ENCODE measurements at regions of chr5 and their contacts with region 1.

Region 1: DNA sequence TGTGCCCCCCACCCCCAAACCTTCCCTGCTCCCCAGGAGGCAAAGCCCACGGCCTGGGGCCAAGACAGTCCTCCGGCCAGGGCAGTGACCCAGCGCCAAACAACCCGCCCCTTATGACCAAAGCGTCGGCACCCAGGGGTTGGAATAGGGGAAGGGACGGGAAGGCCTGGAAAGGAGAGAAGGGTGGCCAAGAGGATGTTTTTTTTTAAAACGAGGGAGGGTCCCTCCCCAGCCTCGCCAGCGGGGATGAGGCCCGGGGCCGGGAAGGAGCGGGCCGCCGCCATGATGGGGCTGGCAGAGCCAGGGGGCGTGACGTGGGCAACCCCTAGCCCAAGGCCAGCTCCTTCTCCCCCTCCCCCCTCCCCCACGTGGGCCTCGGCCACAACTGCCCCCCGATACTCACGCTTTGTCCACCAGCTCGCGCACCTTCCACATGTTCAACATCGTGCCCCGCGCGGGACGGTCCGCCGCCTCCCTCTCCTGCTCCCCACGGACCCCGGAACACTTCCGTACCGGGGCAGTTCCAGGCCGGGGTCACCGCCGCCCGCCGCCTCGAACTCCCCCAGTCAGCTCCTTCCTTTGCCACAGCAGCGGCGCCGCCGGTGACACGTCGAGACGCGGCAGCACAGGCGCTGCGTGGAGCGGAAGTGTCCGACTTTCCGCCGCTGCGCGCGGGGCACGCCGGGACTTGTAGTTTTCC is at the start of gene CLINT1:
- DNase-seq: peak; percentile 94
- ATAC-seq: peak; percentile 81
- H3K4me3 Mint-ChIP-seq: peak within 1 kb of the TSS; percentile 91
- H3K27ac Mint-ChIP-seq: peak within 1 kb of the TSS; percentile 96
- H3K4me1 Mint-ChIP-seq: peaks cover 76% of the 10 kb centered on the region
- H3K27me3 Mint-ChIP-seq: no peaks in the 10 kb centered on the region
- total RNA-seq, gene CLINT1: 59.0 to 69.0 TPM

Region 2: DNA sequence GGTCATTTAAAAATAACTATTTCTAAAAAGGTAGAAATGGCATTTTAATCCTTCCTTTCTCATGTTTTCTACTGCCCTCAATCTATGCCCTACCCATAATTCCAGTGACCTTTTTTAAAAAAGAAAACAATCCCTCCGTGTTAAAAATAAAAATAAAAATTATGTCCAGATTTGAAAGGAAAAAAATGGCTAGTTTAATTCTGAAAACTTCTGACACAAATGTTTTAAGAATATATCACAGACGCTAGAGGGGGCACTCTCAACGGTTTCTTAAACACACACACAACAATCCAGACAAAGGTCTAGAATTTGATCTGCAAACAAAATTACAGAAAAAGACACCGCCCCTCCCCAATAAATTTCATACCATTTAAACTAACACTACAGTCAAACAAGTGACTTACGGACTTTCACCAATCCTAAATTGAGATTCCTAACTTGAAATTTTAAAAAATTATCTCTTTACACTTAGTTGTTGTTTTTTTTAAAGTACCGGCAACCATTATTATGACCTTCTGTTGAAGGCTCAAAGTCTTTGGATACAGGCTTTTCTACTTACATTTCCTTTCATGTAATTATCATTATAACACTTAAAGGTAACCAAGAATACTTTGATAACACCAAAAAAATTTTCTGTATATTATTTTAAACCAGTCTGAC is 38.0 kb before region 1 on chr5:
- CTCF ChIA-PET with region 1: interaction called, 20 read pairs
- POLR2A ChIA-PET with region 1: no interaction called
- intact Hi-C with region 1: loop called (anchors 2 to 5 kb)
- DNase-seq: peak; percentile 42
- ATAC-seq: no peak
- H3K4me3 Mint-ChIP-seq: no peak overlapping the region
- H3K27ac Mint-ChIP-seq: no peak overlapping the region
- H3K4me1 Mint-ChIP-seq: peaks cover 38% of the 10 kb centered on the region
- H3K27me3 Mint-ChIP-seq: no peaks in the 10 kb centered on the region

Region 3: GRCh38 chr5:157870837-157871834 is 12.5 kb after region 1 on chr5:
- CTCF ChIA-PET with region 1: interaction called, 5 read pairs
- POLR2A ChIA-PET with region 1: no interaction called
- intact Hi-C with region 1: loop called (anchors 1 kb)
- DNase-seq: no peak
- ATAC-seq: peak; percentile 60
- H3K4me3 Mint-ChIP-seq: no peak overlapping the region
- H3K27ac Mint-ChIP-seq: peak overlapping the region; percentile 26
- H3K4me1 Mint-ChIP-seq: peaks cover 16% of the 10 kb centered on the region
- H3K27me3 Mint-ChIP-seq: no peaks in the 10 kb centered on the region

Region 4: GRCh38 chr5:157892974-157893373 is 34.3 kb after region 1 on chr5:
- CTCF ChIA-PET with region 1: interaction called, 3 read pairs
- POLR2A ChIA-PET with region 1: interaction called, 4 read pairs
- intact Hi-C with region 1: loop called (anchors 1 to 2 kb)
- DNase-seq: no peak
- ATAC-seq: peak; percentile 84
- H3K4me3 Mint-ChIP-seq: no peak overlapping the region
- H3K27ac Mint-ChIP-seq: no peak overlapping the region
- H3K4me1 Mint-ChIP-seq: peaks cover 19% of the 10 kb centered on the region
- H3K27me3 Mint-ChIP-seq: no peaks in the 10 kb centered on the region

Region 5: DNA sequence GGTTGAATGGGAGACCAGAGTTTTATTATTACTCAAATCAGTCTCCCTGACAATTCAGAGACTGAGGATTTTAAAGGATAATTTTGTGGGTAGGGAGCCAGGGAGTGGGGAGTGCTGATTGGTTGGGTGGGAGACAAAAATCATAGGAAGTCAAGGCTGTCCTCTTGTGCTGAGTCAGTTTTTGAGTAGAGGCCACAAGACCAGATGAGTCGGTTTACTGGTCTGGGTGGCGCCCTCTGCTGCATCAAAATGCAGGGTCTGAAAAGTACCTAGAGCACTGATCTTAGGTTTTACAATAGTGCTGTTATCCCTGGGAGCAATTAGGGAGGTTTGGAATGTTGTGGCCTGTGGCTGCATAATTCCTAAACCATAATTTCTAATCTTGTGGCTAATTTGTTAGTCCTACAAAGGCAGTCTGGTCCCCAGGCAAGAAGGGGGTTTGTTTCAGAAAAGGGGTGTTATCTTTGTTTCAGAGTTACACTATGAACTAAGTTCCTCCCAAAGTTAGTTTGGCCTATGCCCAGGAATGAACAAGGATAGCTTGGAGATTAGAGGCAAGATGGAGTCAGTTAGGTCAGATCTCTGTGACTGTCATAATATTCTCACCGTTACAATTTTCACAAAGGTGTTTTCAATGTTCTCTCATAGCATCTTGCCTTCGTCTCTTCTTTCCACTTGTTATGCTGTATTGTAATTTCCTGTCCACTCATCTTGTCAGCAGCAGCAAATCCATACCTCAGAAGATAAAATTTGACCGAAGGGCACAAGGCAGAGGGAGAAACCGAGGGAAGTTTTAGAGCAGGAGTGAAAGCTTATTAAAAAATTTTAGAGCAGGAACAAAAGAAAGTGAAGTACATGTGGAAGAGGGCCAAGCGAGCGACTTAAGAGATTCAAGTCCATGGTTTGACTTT is 59.5 kb after region 1 on chr5:
- CTCF ChIA-PET with region 1: interaction called, 11 read pairs
- POLR2A ChIA-PET with region 1: no interaction called
- intact Hi-C with region 1: loop called (anchors 1 to 2 kb)
- DNase-seq: peak; percentile 86
- ATAC-seq: peak; percentile 87
- H3K4me3 Mint-ChIP-seq: no peak overlapping the region
- H3K27ac Mint-ChIP-seq: peak overlapping the region; percentile 51
- H3K4me1 Mint-ChIP-seq: peaks cover 26% of the 10 kb centered on the region
- H3K27me3 Mint-ChIP-seq: no peaks in the 10 kb centered on the region

Region 6: DNA sequence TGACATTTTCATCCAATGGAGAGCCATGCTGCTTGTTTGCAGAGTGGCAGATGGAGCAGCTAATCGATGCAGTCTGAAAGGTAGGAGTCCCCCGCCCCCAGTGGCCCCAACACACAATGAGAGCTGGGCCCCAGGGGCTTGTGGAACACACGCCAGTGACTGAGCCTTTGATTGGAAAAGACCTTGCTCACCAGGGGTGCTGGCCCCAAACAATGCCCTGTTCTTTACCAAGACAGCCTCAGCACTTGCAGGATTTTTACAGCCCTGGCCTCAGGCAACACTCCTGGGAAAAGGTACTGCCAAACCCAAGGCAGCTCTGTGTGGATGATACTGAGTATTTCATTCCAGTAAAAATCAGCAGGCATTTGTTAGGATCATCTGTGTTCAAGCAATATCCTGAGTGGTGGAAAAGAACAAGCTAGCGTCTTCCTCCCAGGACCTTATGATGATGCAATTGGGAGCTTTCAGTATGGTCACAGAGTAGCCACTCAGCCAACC is 277.1 kb after region 1 on chr5:
- CTCF ChIA-PET with region 1: no interaction called
- POLR2A ChIA-PET with region 1: no interaction called
- intact Hi-C with region 1: no loop called
- DNase-seq: no peak
- ATAC-seq: no peak
- H3K4me3 Mint-ChIP-seq: no peak overlapping the region
- H3K27ac Mint-ChIP-seq: no peak overlapping the region
- H3K4me1 Mint-ChIP-seq: no peaks in the 10 kb centered on the region
- H3K27me3 Mint-ChIP-seq: no peaks in the 10 kb centered on the region

Region 7: DNA sequence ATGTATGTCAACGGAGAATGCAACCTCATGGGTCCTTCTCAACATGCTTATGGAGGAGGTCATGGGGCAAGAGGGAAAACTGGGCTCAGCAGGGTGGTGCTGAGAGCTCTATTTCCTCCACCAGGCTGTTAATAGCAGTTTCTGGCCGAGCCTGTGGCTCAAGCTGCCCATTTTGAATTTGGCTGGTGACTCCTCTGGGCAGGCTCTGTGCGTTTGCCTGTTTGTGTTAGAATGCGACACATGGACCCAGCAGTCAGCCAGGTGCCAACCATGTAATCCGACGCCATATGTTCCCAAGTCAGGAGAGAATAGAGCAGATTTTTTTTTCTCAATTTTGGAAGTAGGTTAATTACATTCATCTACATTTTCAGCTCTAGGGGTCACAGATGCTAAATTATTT is 388.0 kb after region 1 on chr5:
- CTCF ChIA-PET with region 1: no interaction called
- POLR2A ChIA-PET with region 1: no interaction called
- intact Hi-C with region 1: no loop called
- DNase-seq: no peak
- ATAC-seq: no peak
- H3K4me3 Mint-ChIP-seq: no peak overlapping the region
- H3K27ac Mint-ChIP-seq: no peak overlapping the region
- H3K4me1 Mint-ChIP-seq: no peaks in the 10 kb centered on the region
- H3K27me3 Mint-ChIP-seq: peaks cover 8% of the 10 kb centered on the region

Region 8: DNA sequence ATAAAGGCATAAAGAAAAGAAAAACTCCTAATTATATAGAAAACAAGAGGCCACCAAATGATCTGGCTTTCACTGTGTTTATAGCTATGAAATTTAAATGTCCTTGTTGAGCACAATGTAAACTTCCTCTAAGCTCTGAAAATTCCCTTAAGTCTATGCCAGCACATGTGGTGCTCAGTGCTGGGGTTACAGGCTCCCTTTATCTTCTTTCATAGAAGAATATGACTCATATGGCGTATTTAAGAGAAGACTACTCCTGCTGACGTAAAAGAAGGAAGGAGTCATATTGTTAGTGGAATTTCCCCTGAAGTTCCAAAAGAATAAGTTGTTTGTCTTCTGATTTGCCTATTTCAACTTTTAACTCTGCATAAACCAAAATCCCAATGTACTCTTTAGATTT is 1320.3 kb after region 1 on chr5:
- CTCF ChIA-PET with region 1: no interaction called
- POLR2A ChIA-PET with region 1: no interaction called
- intact Hi-C with region 1: loop called in 1 of 2 experiments (anchors 10 kb)
- DNase-seq: peak; percentile 55
- ATAC-seq: peak; percentile 92
- H3K4me3 Mint-ChIP-seq: peak overlapping the region; percentile 46
- H3K27ac Mint-ChIP-seq: peak overlapping the region; percentile 91
- H3K4me1 Mint-ChIP-seq: peaks cover 87% of the 10 kb centered on the region
- H3K27me3 Mint-ChIP-seq: no peaks in the 10 kb centered on the region